ENCODE measurements at regions of chr6 and their contacts with region 1.

Region 1: DNA sequence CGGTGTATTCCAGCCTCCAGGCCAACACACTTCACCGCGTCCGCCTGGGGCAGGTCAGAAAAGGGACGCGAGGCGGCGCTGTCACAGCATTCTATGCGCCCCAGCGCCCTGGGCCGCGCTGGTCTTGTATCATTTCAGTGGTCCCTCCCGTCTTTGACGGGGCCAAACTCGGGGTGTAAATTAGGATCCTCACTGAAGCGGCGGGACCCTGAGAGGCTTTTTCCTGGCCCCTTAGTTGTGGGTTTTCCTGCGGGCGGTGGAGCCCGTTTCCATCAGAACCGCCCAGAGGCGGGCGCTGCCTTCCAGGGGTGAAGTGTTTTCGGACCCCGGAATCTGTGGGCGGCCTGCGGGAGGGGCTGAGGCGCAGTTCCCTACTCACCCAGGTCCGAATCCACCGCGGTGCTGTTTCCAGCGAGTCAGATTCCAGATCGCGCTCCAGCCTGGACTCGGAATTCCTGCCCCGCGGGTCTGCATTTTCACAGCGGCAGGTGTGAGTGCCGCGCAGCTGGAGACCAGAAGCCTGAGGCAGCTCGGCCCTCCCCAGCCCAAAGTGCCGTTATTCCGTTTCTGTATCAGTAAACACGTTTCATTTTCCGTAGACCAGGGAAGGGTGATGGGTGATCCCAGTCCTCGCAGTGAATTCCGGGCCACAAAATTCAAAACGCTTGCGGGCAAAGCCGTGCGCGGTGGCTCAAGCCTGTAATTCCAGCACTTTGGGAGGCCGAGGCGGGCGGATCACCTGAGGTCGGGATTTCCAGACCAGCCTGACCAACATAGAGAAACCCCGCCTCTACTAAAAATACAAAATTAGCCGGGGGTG is 3.9 kb upstream of the MICB start:
- DNase-seq: peak; percentile 69
- H3K4me3 Mint-ChIP-seq: peak overlapping the region; percentile 89
- H3K27ac Mint-ChIP-seq: peak overlapping the region; percentile 85
- H3K4me1 Mint-ChIP-seq: peaks cover 46% of the 10 kb centered on the region
- H3K27me3 Mint-ChIP-seq: no peaks in the 10 kb centered on the region

Region 2: GRCh38 chr6:30678964-30679726 is 814.9 kb before region 1 on chr6:
- intact Hi-C with region 1: loop called (anchors 5 kb)
- DNase-seq: peak; percentile 85
- H3K4me3 Mint-ChIP-seq: peak overlapping the region; percentile 94
- H3K27ac Mint-ChIP-seq: peak overlapping the region; percentile 90
- H3K4me1 Mint-ChIP-seq: peaks cover 26% of the 10 kb centered on the region
- H3K27me3 Mint-ChIP-seq: no peaks in the 10 kb centered on the region

Region 3: DNA sequence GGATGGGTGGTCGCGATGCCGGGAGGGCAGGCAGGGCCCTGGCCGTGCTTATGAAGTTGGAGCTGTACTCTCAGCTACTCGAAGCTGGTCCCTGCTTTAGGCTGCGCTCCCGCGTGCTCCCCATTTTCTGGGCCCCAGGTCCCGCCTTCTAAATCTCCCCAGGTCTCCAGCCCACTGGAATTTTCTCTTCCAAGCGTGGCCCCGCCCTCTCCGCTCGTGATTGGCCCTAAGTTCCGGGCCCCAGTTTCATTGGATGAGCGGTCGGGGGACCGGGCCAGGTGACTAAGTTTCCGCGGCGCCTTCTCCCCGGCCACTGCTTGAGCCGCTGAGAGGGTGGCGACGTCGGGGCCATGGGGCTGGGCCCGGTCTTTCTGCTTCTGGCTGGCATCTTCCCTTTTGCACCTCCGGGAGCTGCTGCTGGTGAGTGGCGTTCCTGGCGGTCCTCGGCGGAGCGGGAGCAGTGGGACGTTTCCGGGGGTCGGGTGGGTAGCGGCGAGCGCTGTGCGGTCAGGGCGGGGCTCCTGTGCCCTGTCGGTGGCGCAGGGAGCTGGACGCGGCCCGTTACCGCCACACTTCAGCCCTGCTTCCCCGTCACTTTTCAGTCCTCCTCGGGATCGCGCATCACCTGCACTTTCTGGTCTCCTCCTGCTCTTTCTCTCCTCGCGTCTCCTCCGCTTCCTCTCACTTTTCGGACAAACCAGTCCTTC is 90.6 kb before region 1 on chr6 and contains the start of gene MICA:
- intact Hi-C with region 1: loop called (anchors 2 kb)
- DNase-seq: peak; percentile 66
- H3K4me3 Mint-ChIP-seq: peak within 1 kb of the TSS; percentile 84
- H3K27ac Mint-ChIP-seq: peak within 1 kb of the TSS; percentile 84
- H3K4me1 Mint-ChIP-seq: peaks cover 54% of the 10 kb centered on the region
- H3K27me3 Mint-ChIP-seq: peaks cover 2% of the 10 kb centered on the region
- total RNA-seq, gene MICA: 11.5 and 12.4 TPM in 2 replicates

Region 4: DNA sequence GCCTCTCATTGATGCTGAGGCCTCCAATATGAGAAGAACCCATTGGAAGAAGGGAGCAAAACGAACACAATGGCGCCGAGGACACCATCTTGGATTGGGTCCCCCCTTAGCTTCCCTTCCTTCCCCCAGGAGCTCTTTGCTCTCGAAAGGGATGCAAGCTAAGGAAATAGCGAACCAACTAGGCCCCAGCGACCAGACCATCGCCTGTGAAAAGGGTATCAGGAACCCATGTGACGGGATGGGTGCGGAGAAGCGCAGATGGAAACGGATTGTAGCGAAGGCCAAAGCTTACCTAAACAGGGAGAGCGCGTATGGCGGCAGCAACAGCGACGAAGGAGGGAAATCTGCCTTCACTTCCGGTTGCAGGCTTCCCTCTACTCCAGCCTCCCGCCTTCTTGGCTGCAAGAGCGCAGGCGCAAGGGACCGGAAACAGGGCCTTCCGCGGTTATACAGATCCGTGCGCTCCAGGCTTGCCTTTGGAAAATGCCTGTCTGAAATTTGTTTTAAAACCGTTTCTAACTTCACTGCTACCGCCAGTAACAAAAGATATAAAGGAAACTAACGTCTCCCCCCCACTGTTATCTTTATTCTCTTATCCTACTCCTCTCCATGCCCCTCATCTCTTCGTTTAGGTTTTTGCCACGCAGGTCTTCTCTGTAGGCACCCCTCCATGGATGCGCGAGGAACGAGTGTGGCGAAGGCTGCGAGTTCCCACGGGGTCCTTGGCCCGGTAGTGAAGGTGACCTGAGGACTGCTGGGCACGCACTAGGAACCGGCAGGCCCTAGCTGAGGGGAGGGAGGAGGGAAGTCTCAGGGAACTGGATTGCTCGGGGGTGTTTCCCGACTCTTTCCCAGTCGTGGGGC is 47.8 kb after region 1 on chr6 and contains the start of gene DDX39B:
- intact Hi-C with region 1: loop called (anchors 1 kb)
- DNase-seq: peak; percentile 92
- H3K4me3 Mint-ChIP-seq: peak within 1 kb of the TSS; percentile 100
- H3K27ac Mint-ChIP-seq: peak within 1 kb of the TSS; percentile 97
- H3K4me1 Mint-ChIP-seq: peaks cover 41% of the 10 kb centered on the region
- H3K27me3 Mint-ChIP-seq: peaks cover 3% of the 10 kb centered on the region
- total RNA-seq, gene DDX39B: 628 and 637 TPM in 2 replicates

Region 5: DNA sequence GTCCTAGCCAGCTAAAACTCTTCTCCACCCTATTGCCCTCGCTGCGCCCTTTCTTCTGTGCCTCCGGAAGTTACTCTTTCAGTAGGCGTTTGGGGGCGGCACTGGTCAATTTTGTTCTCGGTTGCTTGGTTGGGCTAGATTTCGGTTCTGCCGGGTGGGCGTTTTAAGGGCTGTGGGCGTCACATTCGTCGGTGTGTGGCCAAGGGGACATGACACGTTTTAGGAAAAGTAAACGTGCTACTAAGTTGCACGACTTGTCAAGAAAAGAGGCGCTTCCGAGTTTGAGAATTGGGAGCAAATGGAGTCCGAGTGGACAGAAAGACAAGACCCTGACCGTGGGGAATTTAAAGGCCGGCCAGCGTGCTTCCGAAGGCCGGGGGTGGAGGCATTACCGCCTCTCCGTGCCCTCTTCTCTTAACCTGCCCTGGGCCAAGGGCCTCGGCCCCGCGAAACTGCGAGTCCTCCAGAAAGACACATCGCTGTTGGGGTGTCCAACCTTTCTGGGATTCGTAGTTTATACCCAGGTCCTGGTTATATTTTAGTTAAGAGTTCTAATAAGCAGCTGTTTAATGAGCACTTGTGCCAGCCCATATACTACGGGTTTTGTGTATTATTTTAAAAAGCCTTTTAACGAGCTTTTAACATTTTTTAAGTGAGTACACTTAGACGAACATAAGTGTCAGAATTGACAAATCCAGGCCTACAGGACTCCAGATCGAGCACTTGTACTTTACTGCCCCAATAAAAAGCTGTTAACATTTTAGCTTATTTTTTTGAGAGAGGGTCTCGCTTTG is 159.0 kb after region 1 on chr6:
- intact Hi-C with region 1: loop called (anchors 1 kb)
- DNase-seq: peak; percentile 81
- H3K4me3 Mint-ChIP-seq: peak overlapping the region; percentile 93
- H3K27ac Mint-ChIP-seq: peak overlapping the region; percentile 100
- H3K4me1 Mint-ChIP-seq: peaks cover 48% of the 10 kb centered on the region
- H3K27me3 Mint-ChIP-seq: no peaks in the 10 kb centered on the region

Region 6: GRCh38 chr6:31901953-31902643 is 408.0 kb after region 1 on chr6 and contains the start of gene ZBTB12:
- intact Hi-C with region 1: loop called (anchors 5 kb)
- DNase-seq: peak; percentile 82
- H3K4me3 Mint-ChIP-seq: peak within 1 kb of the TSS; percentile 81
- H3K27ac Mint-ChIP-seq: peak within 1 kb of the TSS; percentile 88
- H3K4me1 Mint-ChIP-seq: peaks cover 37% of the 10 kb centered on the region
- H3K27me3 Mint-ChIP-seq: no peaks in the 10 kb centered on the region
- total RNA-seq, gene ZBTB12: 4.6 and 5.1 TPM in 2 replicates

Measured in activated T-helper 1 cell treated with anti-CD3 and anti-CD28 coated beads, Interleukin-12 subunit alpha, Interleukin-12 subunit beta, Interleukin-2, Interleukin-4 antibody, amounts not matched to agents 30 ng/mL and 10 ng/mL and 1 ng/mL, durations not matched to agents 14 hours and 24 hours and 36 hours (primary cell).